Dorsolateral prefrontal cortex (tissue), 120 donors: ENCODE measurements at regions of chr9 and their contacts with region 1.

Region 1: GRCh38 chr9:131111854-131112311 is 13.5 kb upstream of the NUP214 start:
- DNase-seq: peak; percentile 42 to 95 (median 93)
- H3K4me3 ChIP-seq: peak overlapping the region in 30 of 59 donors; percentile 4 to 46 (median 29)
- H3K27ac ChIP-seq: peak overlapping the region; percentile 30 to 99 (median 96)
- H3K27me3 ChIP-seq: peaks cover 0 to 4% (median 0%) of the 10 kb centered on the region in 45 donors
- CTCF ChIP-seq: peak in 23 of 56 donors; percentile 9 to 51 (median 22)

Region 2: GRCh38 chr9:131096269-131097125 is 15.4 kb before region 1 on chr9 and contains the start of gene AIF1L:
- intact Hi-C with region 1: loop called in 1 of 2 experiments (anchors 2 kb)
- DNase-seq: peak in 9 of 10 donors; percentile 53 to 81 (median 67)
- H3K4me3 ChIP-seq: peak within 1 kb of the TSS; percentile 53 to 85 (median 72)
- H3K27ac ChIP-seq: peak within 1 kb of the TSS in 58 of 59 donors; percentile 33 to 93 (median 81)
- H3K27me3 ChIP-seq: peaks cover 0 to 51% (median 11%) of the 10 kb centered on the region in 45 donors
- CTCF ChIP-seq: peak in 37 of 56 donors; percentile 12 to 61 (median 37)
- total RNA-seq, gene AIF1L: 23.4 to 303 (median 71.6) TPM